GM12878 (cell line): ENCODE measurements at regions of chr14 and their contacts with region 1.

Region 1: DNA sequence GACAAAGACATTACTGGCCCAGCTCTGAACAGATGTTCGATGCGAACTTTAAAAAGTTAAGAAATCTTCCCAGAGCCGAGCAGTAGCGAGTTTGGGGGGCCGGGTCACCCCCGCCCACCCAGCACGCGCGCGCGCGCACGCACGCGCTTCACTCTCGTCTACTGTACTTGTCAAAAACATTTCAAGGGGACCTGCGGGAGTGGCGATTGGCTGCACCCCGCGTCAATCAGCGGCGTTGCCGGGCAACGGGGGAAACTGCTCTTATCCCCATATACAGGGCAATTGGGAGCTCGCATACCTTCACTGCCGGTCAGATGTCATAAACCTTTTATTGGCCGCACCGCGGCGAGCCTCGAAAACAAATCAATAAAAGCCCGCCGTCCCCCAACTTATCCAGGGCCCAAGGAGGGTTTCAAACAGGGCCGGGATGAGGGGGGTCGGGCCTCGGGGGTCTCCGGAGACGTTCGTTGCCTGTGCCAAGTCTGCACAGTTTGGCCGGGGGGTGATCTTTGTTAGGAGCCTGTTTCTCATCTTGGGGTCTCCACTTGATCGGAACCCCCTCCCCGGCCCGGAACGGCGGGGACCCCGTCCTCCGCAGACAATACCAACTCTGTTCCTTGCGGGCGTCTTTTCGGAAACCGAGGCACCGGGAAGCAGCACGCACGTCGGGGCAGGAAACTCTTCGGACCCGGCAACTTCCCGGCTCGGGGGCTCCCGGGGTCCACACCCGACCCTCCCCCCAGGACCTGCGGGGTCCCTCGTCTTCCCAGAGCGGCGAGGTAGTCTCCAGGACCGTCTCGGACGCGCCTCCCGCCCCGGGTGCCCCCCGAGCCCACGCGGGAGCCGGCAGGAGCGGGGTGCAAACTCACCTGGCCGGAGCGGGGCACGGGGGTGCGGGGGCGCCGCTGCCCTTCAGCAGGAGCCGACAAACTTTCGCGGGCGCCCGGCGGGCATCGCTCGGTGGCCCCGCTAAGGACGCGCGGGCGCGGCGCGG is 734 bp downstream of the FOXN3 start:
- DNase-seq: peak; percentile 94
- ATAC-seq: peak; percentile 85
- H3K4me3 ChIP-seq: peak overlapping the region; percentile 85
- H3K27ac ChIP-seq: peak overlapping the region; percentile 91
- H3K4me1 ChIP-seq: peaks cover 6% of the 10 kb centered on the region
- H3K27me3 ChIP-seq: no peaks in the 10 kb centered on the region
- CTCF ChIP-seq: no peak
- EP300 ChIP-seq: no peak
- POLR2A ChIP-seq: peak; percentile 31; the same call in 1 of the 2 replicates
- RAD21 ChIP-seq: no peak

Region 2: DNA sequence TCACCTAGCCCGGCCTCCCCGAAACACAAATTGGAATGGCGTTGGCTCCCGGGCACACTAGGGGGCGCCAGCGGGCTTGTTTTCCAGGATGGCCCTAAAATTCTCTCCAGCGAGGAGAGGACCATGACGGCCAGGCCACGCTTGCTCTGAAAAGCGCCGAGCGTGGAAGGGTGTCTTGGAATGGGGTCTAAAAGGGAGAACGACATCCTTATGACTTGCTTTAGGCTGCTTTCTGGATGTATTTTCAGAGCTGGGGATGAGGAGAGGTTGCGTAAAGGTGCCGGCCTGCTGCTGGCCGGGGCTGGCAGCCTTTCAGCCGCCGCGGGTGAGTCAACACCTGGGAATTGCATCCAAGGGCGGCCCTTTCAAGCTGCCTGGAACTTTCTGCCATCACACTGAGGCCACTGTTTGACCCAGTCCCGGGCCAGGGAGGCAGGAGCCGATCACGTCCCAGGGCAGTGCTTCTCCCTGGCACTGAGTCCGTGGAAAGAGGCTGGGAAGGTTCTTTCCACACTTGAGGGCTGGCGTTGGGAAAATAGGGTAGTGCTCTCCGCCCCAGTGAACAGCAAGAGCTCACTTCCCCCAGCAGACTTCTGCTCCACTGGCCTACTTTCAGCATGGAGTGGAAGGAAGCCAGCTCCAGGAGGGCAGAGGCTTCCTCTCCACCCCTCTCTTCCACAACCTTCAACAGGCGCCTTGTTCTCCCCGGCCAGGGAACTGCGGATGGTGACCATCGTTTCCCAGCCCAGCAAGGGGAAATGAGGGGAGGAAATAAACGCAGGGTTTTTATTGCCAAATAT is 375.6 kb before region 1 on chr14:
- CTCF ChIA-PET with region 1: interaction called, 5 read pairs
- POLR2A ChIA-PET with region 1: no interaction called
- RAD21 ChIA-PET with region 1: no interaction called
- SMC1A ChIA-PET with region 1: no interaction called
- in situ Hi-C with region 1: no loop called
- intact Hi-C with region 1: loop called (anchors 2 kb)
- DNase-seq: peak; percentile 21
- ATAC-seq: peak; percentile 95
- H3K4me3 ChIP-seq: peak overlapping the region; percentile 59; the same call in 1 of the 2 replicates
- H3K27ac ChIP-seq: no peak overlapping the region
- H3K4me1 ChIP-seq: peaks cover 6% of the 10 kb centered on the region
- H3K27me3 ChIP-seq: no peaks in the 10 kb centered on the region
- CTCF ChIP-seq: peak; percentile 88 to 96 (median 95); a peak in 5 of 6 replicates
- EP300 ChIP-seq: no peak
- POLR2A ChIP-seq: no peak
- RAD21 ChIP-seq: peak; percentile 97

Region 3: DNA sequence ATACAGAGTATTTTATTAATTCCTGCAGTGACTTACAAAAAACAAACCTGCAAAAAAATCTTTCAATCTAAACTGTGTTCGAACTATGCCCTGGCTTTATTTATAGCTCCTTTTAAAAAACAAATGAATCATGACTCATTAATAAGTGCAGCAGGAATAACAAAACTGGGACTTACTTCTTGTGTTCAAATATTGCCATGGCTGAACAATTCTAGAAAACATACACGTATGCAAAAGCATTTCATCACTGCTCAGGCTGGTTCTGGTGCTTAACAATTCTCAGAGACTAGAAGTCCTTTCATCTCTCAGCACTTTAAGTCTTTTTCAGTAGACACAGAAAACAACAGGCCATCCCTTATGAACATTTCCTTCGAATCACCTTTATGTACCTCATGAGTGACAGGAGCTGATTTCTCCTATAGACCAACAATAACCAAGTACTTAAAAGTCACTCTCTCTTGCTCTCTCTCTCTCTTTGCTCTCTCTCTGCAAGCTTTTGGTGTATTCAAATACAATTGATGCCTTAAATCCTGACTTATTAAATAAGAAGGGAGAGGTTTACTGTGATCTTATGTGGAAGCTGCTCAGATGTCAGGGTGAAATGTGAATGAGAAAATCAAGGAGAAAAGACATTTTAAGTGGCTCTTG is 323.1 kb before region 1 on chr14:
- CTCF ChIA-PET with region 1: no interaction called
- POLR2A ChIA-PET with region 1: no interaction called
- RAD21 ChIA-PET with region 1: no interaction called
- SMC1A ChIA-PET with region 1: no interaction called
- in situ Hi-C with region 1: no loop called
- intact Hi-C with region 1: no loop called
- DNase-seq: no peak
- ATAC-seq: no peak
- H3K4me3 ChIP-seq: no peak overlapping the region
- H3K27ac ChIP-seq: no peak overlapping the region
- H3K4me1 ChIP-seq: no peaks in the 10 kb centered on the region
- H3K27me3 ChIP-seq: no peaks in the 10 kb centered on the region; a peak in 1 of 4 replicates
- CTCF ChIP-seq: no peak
- EP300 ChIP-seq: no peak
- POLR2A ChIP-seq: no peak
- RAD21 ChIP-seq: no peak

Region 4: DNA sequence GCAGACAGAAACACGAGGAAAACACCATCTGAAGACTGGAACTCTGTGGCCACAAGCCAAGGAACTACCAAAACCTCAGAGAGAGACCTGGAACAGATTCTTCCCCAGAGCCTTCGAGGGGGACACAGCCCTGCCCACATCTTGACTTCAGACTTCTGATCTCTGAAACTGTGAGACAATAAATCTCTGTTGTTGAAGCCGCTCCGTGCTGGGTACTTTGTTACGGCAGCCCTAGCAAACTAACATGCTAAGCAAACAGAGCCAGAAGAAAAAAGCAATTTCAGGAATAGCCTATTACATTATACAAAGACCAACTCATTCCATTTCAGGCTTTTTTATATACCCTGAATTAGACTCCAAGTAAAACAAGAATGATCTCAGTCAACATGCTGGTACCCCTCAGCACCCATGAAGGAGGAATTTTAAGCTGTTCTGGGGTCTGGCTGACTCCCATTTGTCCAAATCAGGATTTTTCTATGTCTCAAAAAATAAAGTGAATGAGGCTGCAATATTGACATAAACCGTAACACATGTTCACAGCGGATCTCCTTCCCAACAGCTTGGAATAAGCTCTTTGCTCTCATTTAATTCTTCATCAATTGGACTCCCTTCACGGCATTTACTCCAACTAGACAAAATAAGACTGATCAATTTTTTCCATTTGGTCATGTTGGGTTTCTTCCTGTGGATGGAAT is 189.4 kb before region 1 on chr14:
- CTCF ChIA-PET with region 1: no interaction called
- POLR2A ChIA-PET with region 1: no interaction called
- RAD21 ChIA-PET with region 1: no interaction called
- SMC1A ChIA-PET with region 1: no interaction called
- in situ Hi-C with region 1: no loop called
- intact Hi-C with region 1: no loop called
- DNase-seq: no peak
- ATAC-seq: no peak
- H3K4me3 ChIP-seq: no peak overlapping the region
- H3K27ac ChIP-seq: no peak overlapping the region
- H3K4me1 ChIP-seq: no peaks in the 10 kb centered on the region
- H3K27me3 ChIP-seq: no peaks in the 10 kb centered on the region
- CTCF ChIP-seq: no peak
- EP300 ChIP-seq: no peak
- POLR2A ChIP-seq: no peak
- RAD21 ChIP-seq: no peak

Region 5: DNA sequence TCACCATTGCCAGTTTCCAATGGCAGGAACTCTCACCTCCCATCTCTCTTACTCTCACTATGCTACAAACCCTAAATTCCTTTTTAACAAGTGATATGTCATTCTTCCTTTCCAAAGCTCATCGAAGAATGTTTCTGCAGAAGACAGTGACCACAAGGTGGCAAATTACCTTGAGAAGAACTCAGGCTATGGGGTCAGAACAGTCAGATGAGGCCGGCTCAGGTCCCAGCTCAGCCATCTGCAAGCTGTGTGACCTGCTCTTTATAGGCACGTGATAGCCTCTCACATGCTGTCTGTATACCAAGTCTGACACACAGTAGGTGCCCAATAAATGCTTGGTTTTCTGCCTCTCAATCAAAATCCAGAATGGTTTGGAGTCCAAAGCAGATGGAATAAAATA is 80.0 kb before region 1 on chr14:
- CTCF ChIA-PET with region 1: interaction called, 12 read pairs
- POLR2A ChIA-PET with region 1: interaction called, 7 read pairs
- RAD21 ChIA-PET with region 1: interaction called, 3 read pairs
- SMC1A ChIA-PET with region 1: interaction called, 7 read pairs
- in situ Hi-C with region 1: no loop called
- intact Hi-C with region 1: loop called (anchors 5 kb)
- DNase-seq: no peak
- ATAC-seq: peak; percentile 62
- H3K4me3 ChIP-seq: no peak overlapping the region
- H3K27ac ChIP-seq: no peak overlapping the region
- H3K4me1 ChIP-seq: peaks cover 59% of the 10 kb centered on the region
- H3K27me3 ChIP-seq: no peaks in the 10 kb centered on the region
- CTCF ChIP-seq: peak; percentile 8 to 35 (median 21); a peak in 4 of 6 replicates
- EP300 ChIP-seq: no peak
- POLR2A ChIP-seq: no peak
- RAD21 ChIP-seq: peak; percentile 69

Region 6: GRCh38 chr14:89384023-89384422 is 32.3 kb before region 1 on chr14:
- CTCF ChIA-PET with region 1: interaction called, 3 read pairs
- POLR2A ChIA-PET with region 1: interaction called, 13 read pairs
- RAD21 ChIA-PET with region 1: interaction called, 21 read pairs
- SMC1A ChIA-PET with region 1: interaction called, 16 read pairs
- in situ Hi-C with region 1: no loop called
- intact Hi-C with region 1: loop called (anchors 5 kb)
- DNase-seq: peak; percentile 92
- ATAC-seq: peak; percentile 92
- H3K4me3 ChIP-seq: peak overlapping the region; percentile 28
- H3K27ac ChIP-seq: peak overlapping the region; percentile 77
- H3K4me1 ChIP-seq: peaks cover 49% of the 10 kb centered on the region
- H3K27me3 ChIP-seq: no peaks in the 10 kb centered on the region
- CTCF ChIP-seq: no peak
- EP300 ChIP-seq: peak; percentile 46 to 54; a peak in 2 of 4 replicates
- POLR2A ChIP-seq: no peak
- RAD21 ChIP-seq: no peak

Region 7: GRCh38 chr14:89519040-89519439 is 102.7 kb after region 1 on chr14:
- CTCF ChIA-PET with region 1: no interaction called
- POLR2A ChIA-PET with region 1: no interaction called
- RAD21 ChIA-PET with region 1: no interaction called
- SMC1A ChIA-PET with region 1: no interaction called
- in situ Hi-C with region 1: no loop called
- intact Hi-C with region 1: no loop called
- DNase-seq: no peak
- ATAC-seq: no peak
- H3K4me3 ChIP-seq: no peak overlapping the region
- H3K27ac ChIP-seq: no peak overlapping the region
- H3K4me1 ChIP-seq: no peaks in the 10 kb centered on the region; the same call in 1 of the 2 replicates
- H3K27me3 ChIP-seq: no peaks in the 10 kb centered on the region
- CTCF ChIP-seq: no peak
- EP300 ChIP-seq: no peak
- POLR2A ChIP-seq: no peak
- RAD21 ChIP-seq: no peak

Region 8: DNA sequence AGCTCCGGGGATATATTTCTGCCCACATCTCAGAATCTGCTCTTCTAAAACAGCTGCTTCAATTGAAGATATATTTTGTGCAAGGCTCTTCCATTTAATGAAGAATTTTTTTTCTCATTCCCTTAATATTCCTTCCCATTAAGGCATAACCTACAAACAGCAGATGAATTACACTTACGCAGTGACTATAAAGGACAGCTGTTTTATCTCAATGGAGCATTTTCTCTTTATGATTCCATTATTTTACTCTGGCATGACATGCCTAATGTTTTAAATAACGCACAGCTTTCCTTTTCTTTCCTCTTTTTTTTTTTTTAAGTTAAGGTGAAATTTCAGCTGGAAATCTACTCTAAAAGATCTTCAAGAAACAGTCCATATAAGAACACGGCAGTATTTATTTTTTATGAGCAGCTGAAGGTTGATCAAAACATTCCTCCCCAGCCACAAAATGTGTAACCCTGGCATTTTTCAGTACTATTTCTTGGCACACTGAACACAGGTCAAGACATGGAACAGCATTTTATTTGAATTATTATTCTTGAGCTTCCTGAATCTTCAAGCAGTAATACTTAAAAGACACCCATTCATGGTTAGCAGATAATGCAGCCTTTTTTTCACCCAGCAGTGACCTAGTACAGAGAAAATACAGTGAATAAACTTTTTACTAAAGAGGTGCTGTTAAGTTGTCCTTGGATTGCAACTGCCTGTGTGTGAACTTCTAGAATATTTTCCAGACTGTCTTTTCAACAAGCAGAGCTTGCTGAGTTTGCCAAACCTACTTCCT is 118.8 kb after region 1 on chr14:
- CTCF ChIA-PET with region 1: no interaction called
- POLR2A ChIA-PET with region 1: no interaction called
- RAD21 ChIA-PET with region 1: no interaction called
- SMC1A ChIA-PET with region 1: no interaction called
- in situ Hi-C with region 1: no loop called
- intact Hi-C with region 1: no loop called
- DNase-seq: no peak
- ATAC-seq: no peak
- H3K4me3 ChIP-seq: no peak overlapping the region
- H3K27ac ChIP-seq: no peak overlapping the region
- H3K4me1 ChIP-seq: no peaks in the 10 kb centered on the region
- H3K27me3 ChIP-seq: no peaks in the 10 kb centered on the region
- CTCF ChIP-seq: no peak
- EP300 ChIP-seq: no peak
- POLR2A ChIP-seq: no peak
- RAD21 ChIP-seq: no peak

Region 9: GRCh38 chr14:89767861-89768268 is 351.6 kb after region 1 on chr14:
- CTCF ChIA-PET with region 1: no interaction called
- POLR2A ChIA-PET with region 1: no interaction called
- RAD21 ChIA-PET with region 1: no interaction called
- SMC1A ChIA-PET with region 1: interaction called, 4 read pairs
- in situ Hi-C with region 1: no loop called
- intact Hi-C with region 1: loop called (anchors 1 kb)
- DNase-seq: peak; percentile 65
- ATAC-seq: peak; percentile 94
- H3K4me3 ChIP-seq: no peak overlapping the region
- H3K27ac ChIP-seq: peak overlapping the region; percentile 56
- H3K4me1 ChIP-seq: peaks cover 22% of the 10 kb centered on the region
- H3K27me3 ChIP-seq: no peaks in the 10 kb centered on the region
- CTCF ChIP-seq: peak; percentile 75 to 87 (median 81)
- EP300 ChIP-seq: 0 out of 4 replicates have a peak, but pooled peaks of 1 of the 2 experiments have one; percentile 29
- POLR2A ChIP-seq: no peak
- RAD21 ChIP-seq: peak; percentile 95